ENCODE measurements at regions of chr7 and their contacts with region 1.

Region 1: DNA sequence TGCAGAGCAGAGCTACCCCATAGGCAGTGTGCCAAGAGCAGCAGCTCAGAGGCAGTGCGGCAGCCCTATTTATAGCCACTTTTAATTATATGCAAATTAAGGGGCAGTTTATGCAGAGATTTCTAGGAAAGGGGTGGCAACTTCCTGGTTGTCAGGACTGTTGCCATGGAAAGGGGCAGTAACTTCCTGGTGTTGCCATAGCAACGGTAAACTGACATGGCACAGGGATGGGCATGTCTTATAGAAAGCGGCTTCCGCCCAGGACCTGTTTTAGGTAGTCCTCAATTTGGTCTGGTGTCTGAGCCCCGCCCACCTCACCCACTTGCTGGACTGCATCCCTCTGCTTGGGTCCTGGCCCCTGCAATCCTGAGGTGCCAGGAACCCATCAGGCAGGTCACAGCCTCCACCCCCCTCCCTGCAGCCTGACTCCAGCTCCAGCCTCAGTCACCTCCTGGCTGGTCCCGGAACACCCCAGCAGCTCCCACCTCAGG is 115.8 kb downstream of the TMEM130 start:
- DNase-seq: no peak

Region 2: DNA sequence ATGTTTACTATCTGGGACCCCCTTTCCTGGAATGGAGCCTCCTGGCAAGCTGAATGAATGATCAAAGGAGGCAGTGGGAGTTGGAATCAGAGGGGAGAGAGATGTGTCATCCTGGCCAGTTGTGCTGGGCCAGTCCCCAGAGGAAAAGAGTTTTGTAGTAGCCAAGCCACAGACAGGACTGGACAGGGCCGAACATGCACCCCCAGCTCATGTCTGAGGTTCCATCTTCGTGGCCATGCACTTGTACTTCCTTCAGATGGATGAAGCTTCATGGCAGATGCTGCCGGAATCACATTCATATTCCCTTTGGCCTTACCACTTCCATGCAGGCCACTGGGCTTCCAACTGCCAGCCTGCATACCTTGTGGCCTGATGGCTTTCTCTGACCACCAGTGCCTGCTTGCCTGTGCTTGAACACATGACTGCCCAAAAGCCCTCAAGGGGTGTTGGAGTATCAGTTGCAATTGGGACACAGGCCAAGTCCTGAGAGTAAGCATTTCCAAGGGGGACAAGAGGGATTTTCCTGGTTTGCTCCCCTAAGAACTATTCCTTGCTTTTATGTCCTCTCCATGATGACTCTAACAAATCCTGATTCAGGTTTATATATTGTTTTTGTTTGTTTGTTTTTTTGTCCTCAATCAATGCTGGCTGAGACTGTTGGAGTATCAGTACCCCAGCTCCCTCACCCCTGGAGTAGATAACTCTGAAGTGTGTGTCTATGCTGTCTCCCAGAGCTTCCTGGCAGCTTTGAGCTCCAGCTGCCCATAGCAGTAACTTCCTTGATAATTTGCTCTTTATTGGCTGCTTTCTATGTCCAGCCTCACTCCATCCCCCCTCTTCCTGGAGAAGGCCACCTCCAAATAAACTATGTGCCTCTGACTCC is 52.2 kb after region 1 on chr7:
- intact Hi-C with region 1: loop called in 1 of 2 experiments (anchors 1 kb)
- DNase-seq: no peak

Region 3: DNA sequence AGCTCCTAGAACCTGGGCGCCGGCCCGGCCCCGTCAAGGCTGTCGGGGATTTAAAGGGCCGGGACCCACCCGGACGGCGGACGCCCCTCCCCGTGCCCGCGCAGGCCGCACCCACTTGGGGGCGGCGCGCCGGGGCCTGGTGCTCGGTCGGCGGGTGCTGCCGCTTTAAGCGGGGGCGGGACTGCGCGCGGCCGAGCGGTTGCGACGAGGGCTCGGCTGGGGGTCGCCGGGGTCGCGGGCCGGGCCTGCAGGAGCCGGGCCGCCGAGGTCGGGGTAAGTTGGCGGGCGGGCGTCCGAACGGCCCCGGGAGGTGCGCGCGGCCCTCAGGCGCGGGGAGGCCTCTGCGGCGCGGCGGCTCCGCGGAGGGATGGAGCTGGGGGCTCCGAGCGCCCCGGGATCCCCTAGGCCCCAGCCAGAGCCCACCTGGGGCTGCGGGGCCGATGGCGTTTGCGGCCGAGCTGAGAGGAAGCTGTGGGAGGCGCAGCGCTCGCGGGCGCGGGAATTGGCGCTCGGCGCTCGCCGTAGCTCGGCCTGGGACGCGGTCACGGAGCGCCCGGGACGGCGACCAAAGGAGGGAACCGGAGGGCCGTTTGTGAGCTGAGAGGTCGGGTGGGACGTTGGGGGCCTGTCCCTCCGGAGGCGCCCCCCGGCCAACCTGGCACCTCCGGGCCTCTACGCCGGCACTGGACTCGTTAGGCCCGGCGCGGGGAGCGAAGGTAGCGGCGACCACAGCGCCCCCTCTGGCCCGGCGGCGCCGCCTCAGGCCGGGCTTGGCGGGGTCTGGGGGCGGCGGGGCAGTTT is 124.5 kb after region 1 on chr7 and contains the start of gene TRRAP:
- intact Hi-C with region 1: loop called in 1 of 2 experiments (anchors 5 kb)
- DNase-seq: peak; percentile 91
- total RNA-seq, gene TRRAP: 25.6 to 26.9 TPM

Measured in posterior vena cava (tissue), 2 donors.